Activated CD4-positive, alpha-beta memory T cell treated with anti-CD3 and anti-CD28 coated beads for 36 hours (primary cell): ENCODE measurements at regions of chr5 and their contacts with region 1.

Region 1: GRCh38 chr5:115735108-115735998 is 81.1 kb downstream of the CDO1 start:
- DNase-seq: no peak
- H3K4me3 Mint-ChIP-seq: no peak overlapping the region
- H3K27ac Mint-ChIP-seq: no peak overlapping the region
- H3K4me1 Mint-ChIP-seq: peaks cover 13% of the 10 kb centered on the region
- H3K27me3 Mint-ChIP-seq: peaks cover 30% of the 10 kb centered on the region

Region 2: DNA sequence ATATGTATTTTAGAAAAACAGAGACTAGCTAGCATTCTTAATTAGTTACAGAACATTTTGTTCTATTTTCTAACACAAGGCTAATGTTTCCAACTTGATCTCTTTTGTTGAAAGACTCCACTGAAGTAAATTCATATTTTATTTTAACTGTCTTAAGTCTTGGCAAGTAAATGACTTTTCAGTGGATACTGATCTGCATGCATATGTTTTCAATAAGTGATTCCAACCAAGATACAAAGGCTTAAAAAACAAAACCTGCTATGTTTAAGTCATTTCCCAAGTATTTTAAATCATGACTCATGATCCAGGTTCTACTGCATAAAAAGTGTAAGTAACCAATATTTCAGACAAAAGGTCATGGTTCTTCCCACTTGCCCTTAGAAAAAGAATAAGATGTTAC is 75.4 kb after region 1 on chr5:
- CTCF ChIA-PET with region 1: no interaction called
- POLR2A ChIA-PET with region 1: no interaction called
- intact Hi-C with region 1: loop called (anchors 5 kb)
- DNase-seq: no peak
- H3K4me3 Mint-ChIP-seq: no peak overlapping the region
- H3K27ac Mint-ChIP-seq: no peak overlapping the region
- H3K4me1 Mint-ChIP-seq: peaks cover 17% of the 10 kb centered on the region
- H3K27me3 Mint-ChIP-seq: peaks cover 36% of the 10 kb centered on the region